ENCODE measurements at regions of chr3 and their contacts with region 1.

Region 1: DNA sequence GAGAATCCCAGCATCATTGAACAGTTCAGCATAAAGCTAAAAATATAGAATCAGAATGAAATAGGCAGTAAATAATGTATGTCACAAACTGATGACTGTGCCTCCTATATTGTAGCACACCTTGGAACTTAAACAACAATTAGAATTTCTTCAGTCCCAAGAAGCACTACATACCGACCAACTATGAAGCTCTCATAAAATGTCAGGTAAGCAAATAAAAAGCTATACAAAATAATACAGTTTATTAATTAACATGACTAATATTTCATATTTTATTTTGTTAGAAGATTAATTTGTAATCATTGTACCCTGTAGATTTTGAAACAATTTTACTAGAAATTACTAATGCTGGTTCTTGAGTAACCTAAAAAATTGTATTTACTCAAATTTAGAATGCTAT is 85.1 kb upstream of the GK5 start:
- DNase-seq: no peak
- H3K4me3 ChIP-seq: no peak overlapping the region
- H3K27ac ChIP-seq: no peak overlapping the region
- H3K4me1 ChIP-seq: no peaks in the 10 kb centered on the region
- H3K27me3 ChIP-seq: no peaks in the 10 kb centered on the region
- CTCF ChIP-seq: no peak

Region 2: DNA sequence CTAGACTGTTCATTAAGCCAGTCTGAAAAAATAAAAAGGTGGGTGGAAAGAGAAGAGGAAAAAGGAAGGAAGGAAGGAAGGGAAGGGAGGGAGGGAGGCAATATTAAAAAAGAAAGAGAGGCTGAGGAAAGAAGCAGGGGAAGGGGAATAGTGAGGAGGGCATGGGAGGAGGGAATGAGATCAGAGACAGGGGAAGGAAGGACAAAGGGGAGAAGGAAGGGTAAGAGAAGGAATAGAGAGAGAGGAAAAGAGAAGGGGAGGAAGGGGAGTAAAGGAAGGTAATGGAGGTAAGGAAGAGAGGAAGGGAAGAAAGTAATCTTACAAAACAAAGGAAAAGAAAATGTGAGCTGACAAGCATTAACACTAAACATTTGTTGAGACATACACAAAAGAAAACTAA is 25.9 kb after region 1 on chr3:
- CTCF ChIA-PET with region 1: no interaction called
- POLR2A ChIA-PET with region 1: interaction called, 12 read pairs
- intact Hi-C with region 1: no loop called
- DNase-seq: no peak
- H3K4me3 ChIP-seq: no peak overlapping the region
- H3K27ac ChIP-seq: no peak overlapping the region
- H3K4me1 ChIP-seq: no peaks in the 10 kb centered on the region
- H3K27me3 ChIP-seq: no peaks in the 10 kb centered on the region
- CTCF ChIP-seq: no peak

Region 3: DNA sequence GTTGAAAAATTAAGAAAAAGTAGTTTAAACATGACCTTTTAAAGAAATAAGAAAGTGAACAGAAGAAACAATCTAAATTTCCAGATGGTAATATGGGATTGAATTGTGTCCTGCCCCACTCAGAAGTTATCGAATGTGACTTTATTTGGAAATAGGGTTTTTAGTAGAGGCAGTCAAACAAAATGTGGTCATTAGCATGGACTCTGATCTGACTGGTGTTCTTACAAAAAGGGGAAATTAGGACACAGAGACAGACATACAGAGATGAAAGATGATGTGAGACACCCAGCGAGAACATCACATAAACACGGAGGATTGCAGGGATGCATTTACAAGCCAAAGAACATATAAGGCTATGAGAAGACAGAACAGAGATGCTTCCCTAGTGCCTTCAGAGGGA is 64.2 kb after region 1 on chr3:
- CTCF ChIA-PET with region 1: no interaction called
- POLR2A ChIA-PET with region 1: no interaction called
- intact Hi-C with region 1: no loop called
- DNase-seq: no peak
- H3K4me3 ChIP-seq: no peak overlapping the region
- H3K27ac ChIP-seq: no peak overlapping the region
- H3K4me1 ChIP-seq: no peaks in the 10 kb centered on the region
- H3K27me3 ChIP-seq: no peaks in the 10 kb centered on the region
- CTCF ChIP-seq: no peak